A673 (cell line): ENCODE measurements at regions of chr2 and their contacts with region 1.

Region 1: GRCh38 chr2:198309673-198310280 is 505.4 kb downstream of the PLCL1 start:
- DNase-seq: peak; percentile 72
- H3K4me3 ChIP-seq: no peak overlapping the region
- H3K27ac ChIP-seq: no peak overlapping the region
- H3K4me1 ChIP-seq: peaks cover 4% of the 10 kb centered on the region
- H3K27me3 ChIP-seq: peaks cover 5% of the 10 kb centered on the region
- CTCF ChIP-seq: peak; percentile 88

Region 2: DNA sequence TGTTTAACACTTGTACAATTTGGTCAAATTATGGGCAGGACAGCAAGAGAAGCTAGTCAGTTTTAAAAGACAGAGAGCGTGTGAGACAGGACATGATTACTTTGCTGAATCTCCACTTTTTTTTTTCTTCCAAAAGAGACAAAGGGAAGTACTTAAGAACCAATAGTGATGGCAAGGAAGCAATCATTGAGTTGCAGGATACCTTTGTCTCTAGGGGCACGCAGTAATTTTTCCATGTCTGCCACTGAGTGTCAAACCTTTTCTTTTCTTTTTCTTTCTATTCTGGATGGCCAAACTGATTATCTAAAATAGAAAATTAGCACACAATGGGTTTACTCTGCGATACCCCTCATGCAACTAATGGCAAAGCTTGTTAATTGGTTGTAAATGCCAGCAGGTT is 27.6 kb after region 1 on chr2:
- CTCF ChIA-PET with region 1: no interaction called
- POLR2A ChIA-PET with region 1: no interaction called
- intact Hi-C with region 1: no loop called
- DNase-seq: peak; percentile 6
- H3K4me3 ChIP-seq: no peak overlapping the region
- H3K27ac ChIP-seq: no peak overlapping the region
- H3K4me1 ChIP-seq: no peaks in the 10 kb centered on the region
- H3K27me3 ChIP-seq: peaks cover 74% of the 10 kb centered on the region
- CTCF ChIP-seq: no peak

Region 3: GRCh38 chr2:199186301-199186751 is 876.5 kb after region 1 on chr2:
- CTCF ChIA-PET with region 1: no interaction called
- POLR2A ChIA-PET with region 1: no interaction called
- intact Hi-C with region 1: no loop called
- DNase-seq: no peak
- H3K4me3 ChIP-seq: no peak overlapping the region
- H3K27ac ChIP-seq: no peak overlapping the region
- H3K4me1 ChIP-seq: no peaks in the 10 kb centered on the region
- H3K27me3 ChIP-seq: no peaks in the 10 kb centered on the region
- CTCF ChIP-seq: no peak

Region 4: DNA sequence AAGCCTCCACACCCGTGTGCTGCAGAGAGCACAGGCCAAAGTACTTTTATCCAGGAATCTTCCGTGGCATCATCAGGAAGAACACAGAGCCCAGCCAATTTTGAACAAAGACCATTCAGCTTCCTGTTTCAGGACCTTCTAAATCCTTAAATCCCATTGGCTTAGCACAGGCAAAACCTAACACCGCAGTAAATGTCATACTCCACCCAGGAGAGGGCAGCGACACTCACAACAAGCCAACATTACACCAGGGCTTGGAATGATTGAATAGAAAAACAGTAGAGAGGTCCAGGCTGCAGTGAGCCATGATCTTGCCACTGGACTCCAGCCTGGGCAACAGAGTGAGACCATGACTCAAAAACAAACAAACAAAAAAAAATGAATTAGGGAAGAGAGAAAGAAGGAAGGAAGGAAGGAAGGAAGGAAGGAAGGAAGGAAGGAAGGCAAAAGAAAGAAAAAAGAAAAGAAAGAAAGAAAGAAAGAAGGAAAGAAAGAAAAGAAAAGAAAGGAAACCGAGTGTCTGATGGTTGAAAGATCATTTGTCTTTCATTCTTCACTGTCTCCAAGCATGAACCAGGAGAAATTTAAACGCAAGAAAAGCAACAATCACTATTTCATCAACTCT is 1292.6 kb after region 1 on chr2:
- CTCF ChIA-PET with region 1: no interaction called
- POLR2A ChIA-PET with region 1: interaction called, 3 read pairs
- intact Hi-C with region 1: loop called (anchors 10 kb)
- DNase-seq: peak; percentile 86
- H3K4me3 ChIP-seq: no peak overlapping the region
- H3K27ac ChIP-seq: peak overlapping the region; percentile 76
- H3K4me1 ChIP-seq: peaks cover 33% of the 10 kb centered on the region
- H3K27me3 ChIP-seq: no peaks in the 10 kb centered on the region
- CTCF ChIP-seq: peak; percentile 54